Posterior vena cava (tissue), 2 donors: ENCODE measurements at regions of chr2 and their contacts with region 1.

Region 1: DNA sequence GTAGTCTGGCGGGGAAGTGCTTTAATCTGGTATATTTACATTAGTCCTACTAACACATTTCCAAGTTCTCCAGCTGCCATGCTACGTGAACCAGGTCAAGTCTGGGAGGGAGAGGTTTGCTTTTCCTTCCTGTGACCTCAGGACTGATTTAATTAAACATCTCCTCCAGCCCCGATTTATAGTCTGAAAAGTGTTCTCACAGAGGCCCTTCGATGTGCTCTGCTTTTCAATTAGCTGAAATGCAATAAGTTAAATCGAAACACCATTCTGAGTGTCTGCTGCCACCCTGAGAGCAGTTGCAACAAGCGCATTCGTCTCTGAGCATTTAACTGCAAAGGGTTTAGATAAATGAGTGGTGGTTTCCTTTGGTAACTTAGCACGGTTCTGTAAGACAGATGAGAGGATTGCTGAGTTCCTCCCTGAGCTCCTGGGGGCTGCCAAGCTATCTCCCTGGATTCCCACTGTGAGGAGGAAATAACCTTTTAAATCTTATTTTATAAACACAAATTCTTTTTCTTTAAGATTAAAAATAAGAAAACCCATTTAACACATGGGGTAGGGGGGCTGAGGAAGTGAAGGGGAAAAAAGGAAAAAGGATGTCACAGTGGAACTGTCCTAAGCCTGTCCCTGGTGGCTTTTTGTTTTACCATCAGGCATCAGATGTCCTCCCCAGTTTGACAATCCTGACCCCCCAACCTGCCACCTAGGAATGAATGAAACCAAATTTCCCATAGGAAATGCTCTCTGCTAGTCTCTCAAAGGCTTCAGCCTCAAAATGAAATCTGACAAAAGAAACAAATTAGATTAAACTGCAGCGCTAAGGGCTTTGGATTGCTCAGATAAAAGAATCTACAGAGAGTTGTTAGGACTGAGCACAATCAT is 56.5 kb upstream of the CREB1 start:
- DNase-seq: no peak

Region 2: GRCh38 chr2:206693399-206694137 is 779.7 kb before region 1 on chr2:
- intact Hi-C with region 1: loop called (anchors 10 kb)
- DNase-seq: no peak

Region 3: GRCh38 chr2:206783718-206784117 is 689.6 kb before region 1 on chr2:
- intact Hi-C with region 1: loop called in 1 of 2 experiments (anchors 10 kb)
- DNase-seq: no peak

Region 4: GRCh38 chr2:206800506-206801417 is 672.5 kb before region 1 on chr2:
- intact Hi-C with region 1: loop called in 1 of 2 experiments (anchors 5 kb)
- DNase-seq: peak; percentile 84

Region 5: DNA sequence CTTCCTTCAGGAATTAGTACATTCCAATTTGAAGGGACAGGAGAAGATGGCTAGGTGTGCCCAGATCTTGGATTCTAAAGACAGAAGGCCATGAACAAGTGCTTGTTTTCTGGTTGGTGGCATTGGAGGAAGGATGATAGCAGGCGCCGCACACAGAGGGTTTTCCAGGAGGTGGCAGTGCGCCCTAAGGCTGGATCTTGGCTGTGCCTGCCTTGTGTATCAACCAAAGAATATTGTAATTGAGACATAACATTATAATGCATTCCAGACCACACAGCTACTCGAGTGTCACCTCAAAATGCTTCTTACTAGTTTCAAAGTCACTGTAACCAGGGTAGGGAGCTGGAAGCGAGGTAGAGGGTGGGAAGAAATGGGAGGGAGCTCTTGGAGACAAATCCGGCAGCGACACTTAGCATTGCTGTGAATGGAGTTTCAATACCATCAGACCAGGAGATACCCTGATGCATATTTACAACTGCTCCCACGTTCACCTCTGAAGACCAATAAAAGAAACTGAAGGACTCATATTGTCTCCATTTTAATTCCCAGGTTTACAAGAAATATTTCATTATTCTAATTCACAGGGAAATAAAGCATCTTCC is 491.4 kb before region 1 on chr2:
- intact Hi-C with region 1: loop called (anchors 5 kb)
- DNase-seq: peak; percentile 91

Region 6: DNA sequence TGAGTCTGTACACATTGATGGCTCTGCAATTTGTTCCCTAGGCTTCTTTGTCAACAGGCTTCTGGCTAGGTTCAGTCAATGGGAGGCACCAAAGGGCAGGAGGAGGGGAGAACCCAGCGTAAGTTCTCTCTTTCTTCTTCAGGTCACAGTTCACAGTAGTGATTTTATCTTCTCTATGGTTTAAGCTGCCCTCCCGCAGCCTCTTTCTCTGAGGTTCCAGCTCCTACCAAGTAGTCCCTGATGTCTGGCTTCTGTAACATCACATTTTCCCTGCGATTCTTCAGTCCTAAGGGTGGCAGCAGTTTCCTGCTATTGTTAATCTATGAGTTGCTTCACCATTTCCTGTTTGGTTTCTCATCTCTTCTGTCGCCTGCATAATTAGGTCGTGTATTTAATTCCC is 426.6 kb before region 1 on chr2:
- intact Hi-C with region 1: loop called in 1 of 2 experiments (anchors 10 kb)
- DNase-seq: no peak

Region 7: DNA sequence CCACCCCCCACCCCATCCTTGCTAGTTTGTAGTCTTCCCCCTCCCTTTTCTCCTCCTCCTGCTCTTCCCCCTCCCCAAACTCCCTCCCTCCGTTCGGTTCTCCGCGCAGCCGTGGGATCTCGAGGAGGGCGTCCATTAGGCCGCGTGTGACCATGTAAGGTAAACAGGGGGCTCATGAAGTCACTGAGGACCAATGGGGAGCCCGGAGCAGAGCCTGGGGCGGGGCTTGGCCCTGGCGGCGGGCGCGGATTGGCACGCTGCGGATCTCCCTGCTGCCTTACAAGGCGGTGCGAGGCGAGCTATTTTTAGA is 307.3 kb before region 1 on chr2:
- intact Hi-C with region 1: loop called (anchors 5 kb)
- DNase-seq: peak; percentile 100